Right ventricle myocardium superior (tissue), 1 donor: ENCODE measurements at regions of chrX and their contacts with region 1.

Region 1: GRCh38 chrX:44898411-44899221 is 25.6 kb downstream of the KDM6A start:
- DNase-seq: no peak
- ATAC-seq: no peak

Region 2: GRCh38 chrX:44536198-44536597 is 362.4 kb before region 1 on chrX:
- intact Hi-C with region 1: loop called (anchors 5 kb)
- DNase-seq: no peak
- ATAC-seq: no peak

Region 3: DNA sequence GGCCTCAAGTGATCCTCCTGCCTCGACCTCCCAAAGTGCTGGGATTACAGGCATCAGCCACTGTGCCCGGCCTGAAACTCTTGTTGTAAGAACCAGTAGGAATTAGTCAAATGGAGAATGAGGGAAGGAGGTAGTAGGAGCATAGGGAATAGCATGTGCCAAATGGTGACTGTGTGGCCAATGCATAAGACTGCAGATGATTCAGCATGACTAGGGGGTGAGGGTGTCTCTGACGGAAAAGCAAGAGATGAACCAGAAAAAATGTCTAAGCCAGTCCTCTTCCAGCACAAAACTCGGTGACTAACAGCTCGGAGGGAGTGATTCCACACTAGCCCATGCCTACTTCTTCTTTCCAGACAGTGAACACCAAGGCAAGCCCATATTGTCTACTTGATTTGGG is 113.0 kb before region 1 on chrX:
- intact Hi-C with region 1: no loop called
- DNase-seq: no peak
- ATAC-seq: no peak

Region 4: GRCh38 chrX:44795945-44796450 is 102.6 kb before region 1 on chrX:
- intact Hi-C with region 1: no loop called
- DNase-seq: no peak
- ATAC-seq: no peak

Region 5: DNA sequence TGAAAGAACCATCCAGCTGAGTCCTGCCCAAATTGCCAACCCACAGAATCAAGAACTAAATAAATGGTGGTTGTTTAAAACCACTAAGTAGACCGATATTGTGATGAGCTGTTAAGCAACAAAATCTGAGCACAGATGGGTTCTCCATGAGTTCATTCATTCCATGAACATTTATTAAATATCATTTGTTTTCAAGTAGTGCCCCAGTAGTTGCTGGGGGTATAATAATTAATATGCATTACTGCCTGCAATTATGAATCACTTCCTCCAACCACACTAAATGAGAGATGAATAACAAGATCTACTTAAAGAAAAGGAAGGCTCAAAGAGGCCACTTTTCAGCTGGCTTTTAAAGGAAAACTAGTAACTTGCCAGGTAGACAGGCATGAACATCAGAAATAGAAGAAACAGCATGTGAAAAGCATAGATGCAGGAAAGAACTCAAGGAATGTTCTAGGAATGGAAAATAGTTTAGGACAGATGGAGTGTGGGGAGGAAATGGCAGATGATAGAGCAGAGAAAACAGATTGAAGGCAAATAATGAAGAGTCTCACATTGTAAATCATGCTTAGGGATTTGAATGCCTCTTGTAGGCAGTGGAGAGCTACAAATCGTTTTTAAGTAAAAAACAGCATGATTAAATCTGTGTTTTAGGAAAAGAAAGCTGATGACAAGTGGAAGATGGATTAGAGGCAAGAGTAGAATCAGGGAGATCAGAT is 943.8 kb after region 1 on chrX:
- intact Hi-C with region 1: no loop called
- DNase-seq: no peak
- ATAC-seq: no peak